ENCODE measurements at regions of chr4 and their contacts with region 1.

Region 1: GRCh38 chr4:48546336-48546735 is 56.3 kb downstream of the ZAR1 start:
- DNase-seq: no peak
- ATAC-seq: no peak
- H3K4me3 ChIP-seq: no peak overlapping the region
- H3K27ac ChIP-seq: no peak overlapping the region
- H3K4me1 ChIP-seq: no peaks in the 10 kb centered on the region
- H3K27me3 ChIP-seq: no peaks in the 10 kb centered on the region
- CTCF ChIP-seq: peak; percentile 8 to 72 (median 56)

Region 2: DNA sequence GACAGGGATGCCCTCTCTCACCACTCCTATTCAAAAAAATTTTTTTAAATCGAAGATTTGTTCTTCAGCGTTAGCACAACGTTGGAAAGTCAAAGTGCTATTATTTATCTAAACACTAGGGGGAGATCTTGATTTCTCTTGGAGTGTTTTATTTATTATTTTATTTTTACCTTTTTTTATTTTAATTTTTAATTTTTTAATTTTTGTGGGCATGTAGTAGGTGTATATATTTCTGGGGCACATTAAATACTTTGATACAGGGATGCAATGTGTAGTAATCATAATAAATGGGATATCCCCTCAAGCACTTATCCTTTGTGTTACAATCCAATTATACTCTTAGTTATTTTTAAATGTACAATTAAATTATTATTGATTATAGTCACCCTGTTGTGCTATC is 100.6 kb before region 1 on chr4:
- intact Hi-C with region 1: loop called in 2 of 10 experiments (anchors 5 to 10 kb)
- DNase-seq: no peak
- ATAC-seq: no peak
- H3K4me3 ChIP-seq: no peak overlapping the region
- H3K27ac ChIP-seq: no peak overlapping the region
- H3K4me1 ChIP-seq: no peaks in the 10 kb centered on the region
- H3K27me3 ChIP-seq: no peaks in the 10 kb centered on the region
- CTCF ChIP-seq: peak; percentile 37 to 75 (median 63)